Body of pancreas (tissue), 4 donors: ENCODE measurements at regions of chr6 and their contacts with region 1.

Region 1: DNA sequence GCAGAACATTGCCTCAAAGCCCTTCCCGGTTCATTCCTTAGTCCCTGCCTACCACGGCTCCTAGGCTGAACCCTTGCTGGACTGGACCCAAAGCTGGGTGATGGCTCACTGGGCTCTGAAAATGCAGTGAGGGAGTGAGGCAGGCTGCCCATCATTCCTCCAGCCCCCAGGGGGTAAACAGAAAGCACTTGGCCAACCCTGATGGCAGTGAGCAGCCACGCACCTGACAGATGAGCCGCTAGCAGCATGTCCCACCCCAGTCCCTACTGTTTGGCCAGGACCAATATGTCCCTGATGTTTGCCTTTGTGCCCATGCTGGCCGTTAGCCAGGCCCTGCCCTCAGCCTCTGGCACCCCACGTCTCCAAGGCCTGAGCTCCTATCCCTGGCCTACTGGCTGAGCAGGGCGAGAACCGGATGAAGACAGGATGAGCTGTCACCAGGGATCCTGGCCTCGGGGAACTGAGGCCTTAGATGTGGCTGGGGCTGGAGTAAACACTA is 19.4 kb upstream of the BAK1 start:
- DNase-seq: peak in 2 of 4 donors; percentile 27 to 53
- ATAC-seq: peak; percentile 69
- H3K4me3 ChIP-seq: no peak overlapping the region
- H3K27ac ChIP-seq: peak overlapping the region in 1 of 4 donors; percentile 11
- H3K4me1 ChIP-seq: no peaks in the 10 kb centered on the region
- H3K27me3 ChIP-seq: no peaks in the 10 kb centered on the region
- CTCF ChIP-seq: no peak
- POLR2A ChIP-seq: no peak

Region 2: DNA sequence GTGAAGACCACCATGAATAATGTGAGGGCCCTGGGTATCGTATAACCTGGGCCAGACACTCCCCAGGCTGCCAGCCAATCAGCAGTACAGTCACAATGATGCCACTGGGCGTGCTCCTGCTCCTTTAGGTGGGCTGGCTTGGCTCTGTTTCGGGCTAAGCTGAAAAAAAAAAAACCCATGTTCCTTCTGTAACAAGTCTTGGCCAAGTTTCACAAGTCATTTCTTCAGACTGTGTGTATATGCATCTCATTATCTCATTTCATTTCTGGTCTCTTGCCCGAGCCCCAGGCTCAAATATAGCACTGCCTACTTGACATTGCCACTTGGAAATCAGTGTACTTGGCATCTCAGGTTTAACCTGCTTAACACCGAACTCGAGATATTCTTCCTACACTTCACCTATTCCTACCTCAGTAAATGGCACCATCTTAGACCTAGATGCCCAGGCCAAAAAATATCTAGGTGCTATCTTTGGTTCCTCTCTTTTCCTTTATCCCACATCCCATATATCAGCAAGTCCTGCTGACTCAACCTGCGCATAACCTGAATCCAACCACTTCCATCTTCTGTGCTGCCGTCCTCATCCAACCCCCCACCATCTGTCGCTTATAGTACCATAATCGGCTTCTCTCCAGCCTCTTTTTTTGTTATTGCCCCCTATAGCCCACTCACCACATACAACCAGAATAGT is 110.3 kb after region 1 on chr6:
- intact Hi-C with region 1: loop called (anchors 5 kb)
- DNase-seq: no peak
- ATAC-seq: no peak
- H3K4me3 ChIP-seq: no peak overlapping the region
- H3K27ac ChIP-seq: no peak overlapping the region
- H3K4me1 ChIP-seq: peaks cover 22% of the 10 kb centered on the region
- H3K27me3 ChIP-seq: no peaks in the 10 kb centered on the region
- CTCF ChIP-seq: no peak
- POLR2A ChIP-seq: no peak

Region 3: DNA sequence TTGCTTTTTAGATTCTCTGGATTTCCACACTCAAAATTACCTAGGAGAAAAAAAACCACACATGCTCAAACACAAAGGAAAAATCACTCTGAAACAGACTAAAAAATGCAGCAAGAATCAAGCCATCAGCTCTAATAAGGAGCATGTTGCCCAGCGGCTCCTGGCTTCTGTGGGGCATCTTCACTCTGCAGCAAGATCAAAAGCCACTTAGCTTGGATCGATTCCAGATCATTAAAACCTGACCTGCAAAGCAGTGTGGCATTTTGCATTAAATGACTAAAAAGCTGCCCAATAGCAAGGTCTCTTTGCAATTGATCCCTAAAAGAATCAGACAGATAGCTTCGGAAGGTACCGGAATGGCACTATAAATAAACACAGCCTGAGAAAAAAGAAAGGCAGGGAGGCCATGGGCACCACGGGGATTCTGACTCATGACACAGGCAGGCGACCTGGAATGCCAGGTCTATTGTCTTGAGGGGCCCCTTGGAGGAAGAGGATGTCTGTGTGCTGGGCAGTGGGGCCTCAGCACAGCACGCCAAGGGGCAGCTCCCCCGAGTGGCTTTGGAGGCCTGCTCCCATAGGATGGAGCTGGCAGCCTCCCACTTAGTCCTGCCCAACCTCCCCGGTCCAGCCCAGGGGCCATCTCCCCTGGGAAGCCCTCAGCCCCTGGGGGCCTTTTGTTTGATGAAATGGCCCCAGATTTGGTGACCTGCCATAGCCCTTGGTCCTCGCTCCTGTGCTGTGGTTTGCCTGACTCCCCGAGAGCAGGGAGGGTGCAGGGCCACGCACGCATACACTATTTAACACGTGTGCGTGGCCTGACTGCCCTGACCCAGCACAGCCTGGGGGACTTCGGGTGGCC is 181.9 kb after region 1 on chr6:
- intact Hi-C with region 1: no loop called
- DNase-seq: no peak
- ATAC-seq: no peak
- H3K4me3 ChIP-seq: no peak overlapping the region
- H3K27ac ChIP-seq: no peak overlapping the region
- H3K4me1 ChIP-seq: peaks cover 16% of the 10 kb centered on the region
- H3K27me3 ChIP-seq: no peaks in the 10 kb centered on the region
- CTCF ChIP-seq: no peak
- POLR2A ChIP-seq: no peak